ENCODE measurements at regions of chr4 and their contacts with region 1.

Region 1: DNA sequence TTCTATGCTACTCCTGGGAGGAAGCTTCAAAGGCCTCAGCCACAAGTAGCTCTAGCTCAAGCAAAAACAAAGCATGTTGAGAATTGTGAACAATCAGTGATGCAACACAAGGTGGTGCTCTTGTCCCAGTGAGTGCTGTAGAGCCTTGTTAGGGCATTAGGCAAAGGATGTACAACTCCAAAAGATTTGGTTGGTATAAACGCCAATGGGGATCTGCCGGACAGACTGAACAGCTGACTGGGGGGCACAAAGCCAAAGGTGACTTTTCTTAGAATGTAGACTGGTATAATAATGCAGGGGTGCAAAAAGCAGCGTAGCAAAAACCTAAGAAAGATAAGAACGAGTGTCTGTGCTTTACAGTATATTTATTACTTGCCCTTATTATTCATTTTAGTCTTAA is 62.6 kb upstream of the ALB start:
- DNase-seq: peak; percentile 15 to 67
- ATAC-seq: peak; percentile 91
- H3K4me3 ChIP-seq: no peak overlapping the region
- H3K27ac ChIP-seq: no peak overlapping the region
- H3K4me1 ChIP-seq: peaks cover 21% of the 10 kb centered on the region
- CTCF ChIP-seq: peak; percentile 70
- EP300 ChIP-seq: no peak
- POLR2A ChIP-seq: no peak
- RAD21 ChIP-seq: peak; percentile 86 to 88

Region 2: GRCh38 chr4:73299548-73300280 is 41.7 kb before region 1 on chr4:
- CTCF ChIA-PET with region 1: no interaction called
- POLR2A ChIA-PET with region 1: no interaction called
- DNase-seq: no peak
- ATAC-seq: no peak
- H3K4me3 ChIP-seq: no peak overlapping the region
- H3K27ac ChIP-seq: no peak overlapping the region
- H3K4me1 ChIP-seq: no peaks in the 10 kb centered on the region
- CTCF ChIP-seq: no peak
- EP300 ChIP-seq: no peak
- POLR2A ChIP-seq: no peak
- RAD21 ChIP-seq: no peak

Region 3: GRCh38 chr4:73376976-73377375 is 35.5 kb after region 1 on chr4:
- CTCF ChIA-PET with region 1: no interaction called
- POLR2A ChIA-PET with region 1: no interaction called
- DNase-seq: no peak
- ATAC-seq: no peak
- H3K4me3 ChIP-seq: no peak overlapping the region
- H3K27ac ChIP-seq: no peak overlapping the region
- H3K4me1 ChIP-seq: no peaks in the 10 kb centered on the region
- CTCF ChIP-seq: no peak
- EP300 ChIP-seq: no peak
- POLR2A ChIP-seq: no peak
- RAD21 ChIP-seq: no peak

Region 4: GRCh38 chr4:73446336-73446938 is 105.0 kb after region 1 on chr4:
- CTCF ChIA-PET with region 1: interaction called, 17 read pairs
- POLR2A ChIA-PET with region 1: no interaction called
- DNase-seq: peak; percentile 10 to 60
- ATAC-seq: peak; percentile 75 to 88; a peak in 4 of 6 replicates
- H3K4me3 ChIP-seq: no peak overlapping the region
- H3K27ac ChIP-seq: no peak overlapping the region
- H3K4me1 ChIP-seq: peaks cover 23% of the 10 kb centered on the region
- CTCF ChIP-seq: peak; percentile 83
- EP300 ChIP-seq: no peak
- POLR2A ChIP-seq: no peak
- RAD21 ChIP-seq: peak; percentile 58 to 65

Region 5: DNA sequence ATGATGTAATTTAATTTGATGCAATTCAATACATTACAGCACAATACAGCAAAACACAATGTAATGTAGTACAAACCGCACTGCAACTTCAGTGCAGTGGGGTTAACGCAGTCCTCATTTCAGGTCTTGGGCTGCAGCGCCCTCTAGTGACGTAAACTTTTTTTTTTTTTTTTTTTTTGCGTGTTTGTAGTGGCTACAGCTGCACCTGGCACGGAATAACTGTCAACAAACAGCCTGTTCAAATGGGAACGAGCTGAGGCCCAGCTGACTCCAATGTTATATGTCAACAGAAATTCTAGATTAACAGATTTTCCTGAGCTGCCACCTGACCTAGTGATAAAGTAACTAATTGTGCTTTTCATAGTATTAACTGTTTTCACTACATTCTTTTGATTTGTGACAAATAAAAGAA is 312.2 kb after region 1 on chr4:
- CTCF ChIA-PET with region 1: interaction called, 14 read pairs
- POLR2A ChIA-PET with region 1: no interaction called
- DNase-seq: peak; percentile 29 to 34
- ATAC-seq: peak; percentile 70 to 79; a peak in 5 of 6 replicates
- H3K4me3 ChIP-seq: no peak overlapping the region
- H3K27ac ChIP-seq: no peak overlapping the region
- H3K4me1 ChIP-seq: no peaks in the 10 kb centered on the region
- CTCF ChIP-seq: peak; percentile 67
- EP300 ChIP-seq: no peak
- POLR2A ChIP-seq: no peak
- RAD21 ChIP-seq: peak; percentile 86

Region 6: DNA sequence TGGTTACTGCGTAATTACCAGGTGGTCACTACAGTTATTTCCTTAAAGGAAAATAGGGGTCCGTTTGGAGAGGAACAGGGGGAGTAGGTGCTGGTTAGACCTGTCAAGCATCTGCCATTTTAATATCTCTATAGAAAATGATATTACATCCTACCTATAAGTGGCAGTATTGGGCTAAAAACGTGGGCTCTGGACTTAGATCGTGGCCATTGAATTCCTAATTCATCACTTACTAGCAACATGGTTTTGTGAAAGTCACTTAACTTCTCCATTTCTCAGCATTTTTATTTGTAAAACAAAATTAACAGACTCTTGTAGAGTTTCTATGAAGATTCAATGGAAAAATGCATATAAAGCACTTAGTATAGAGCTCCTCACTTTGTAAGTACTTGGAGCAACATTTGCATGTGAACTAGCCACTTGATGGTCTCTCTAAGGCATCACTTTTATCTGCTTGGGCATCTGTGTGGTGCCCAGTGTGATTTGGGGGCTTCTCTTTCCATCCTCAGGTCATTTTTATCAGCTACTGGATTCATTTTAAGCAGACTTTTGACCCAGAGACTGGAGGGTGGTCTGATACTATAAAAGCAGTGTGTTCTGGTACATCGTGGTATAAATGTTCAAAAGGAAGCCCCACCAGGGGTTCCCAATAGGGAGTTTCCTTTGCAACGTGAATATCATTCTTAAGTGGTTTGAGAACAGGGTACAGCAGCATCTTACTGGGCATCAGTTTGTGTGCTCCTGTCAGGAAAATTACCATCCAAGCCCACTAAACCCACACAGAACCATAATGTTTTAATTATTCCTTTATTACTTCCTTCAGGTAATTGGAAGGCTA is 321.5 kb after region 1 on chr4:
- CTCF ChIA-PET with region 1: interaction called, 12 read pairs
- POLR2A ChIA-PET with region 1: no interaction called
- DNase-seq: peak; percentile 19 to 61
- ATAC-seq: peak; percentile 54 to 85; a peak in 4 of 6 replicates
- H3K4me3 ChIP-seq: no peak overlapping the region
- H3K27ac ChIP-seq: peak overlapping the region; percentile 54 to 83
- H3K4me1 ChIP-seq: peaks cover 5% of the 10 kb centered on the region; the same call in 2 of the 3 replicates
- CTCF ChIP-seq: peak; percentile 63
- EP300 ChIP-seq: no peak
- POLR2A ChIP-seq: no peak
- RAD21 ChIP-seq: peak; percentile 83 to 84

Measured in A549 (cell line).